Activated CD4-positive, alpha-beta T cell treated with anti-CD3 and anti-CD28 coated beads for 36 hours (primary cell): ENCODE measurements at regions of chr3 and their contacts with region 1.

Region 1: DNA sequence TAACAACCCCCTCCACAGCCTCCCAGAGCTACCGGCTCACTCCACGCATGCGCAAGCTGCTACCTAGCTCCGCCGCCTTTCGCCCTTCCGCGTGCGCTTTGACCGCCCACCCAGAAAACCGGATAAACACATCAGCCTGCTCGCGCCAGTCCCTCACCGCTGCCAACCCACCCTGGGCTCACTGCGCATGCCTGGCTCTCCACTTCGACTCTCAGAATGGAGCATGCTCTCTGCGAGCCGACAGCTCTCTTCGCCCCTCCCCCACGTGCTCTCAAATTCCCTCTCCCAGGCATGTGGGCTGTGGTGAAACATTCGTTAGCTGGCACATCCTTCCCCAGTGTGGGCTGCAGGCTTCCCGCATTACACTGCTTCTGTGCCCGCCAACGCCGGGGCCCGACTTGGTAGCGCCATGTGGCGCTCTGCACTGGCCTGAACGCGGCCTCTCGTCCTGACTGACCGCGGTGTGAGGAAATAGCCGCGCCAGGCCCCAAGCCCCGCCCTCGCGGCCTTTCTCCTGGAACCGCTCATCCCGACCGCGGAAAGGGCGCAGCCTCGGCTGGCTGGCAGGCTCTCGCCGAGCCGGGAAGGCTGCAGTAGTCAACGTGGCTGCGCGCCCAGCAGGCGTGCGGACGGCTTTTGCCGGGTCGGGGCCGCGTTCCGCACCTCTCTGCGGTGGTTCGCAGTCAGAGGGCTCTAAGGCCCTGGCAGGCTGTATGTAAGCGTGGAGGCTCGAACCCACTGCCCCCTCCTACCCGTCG is 445 bp upstream of the MSL2 start:
- DNase-seq: peak; percentile 100
- ATAC-seq: peak; percentile 82
- H3K4me3 Mint-ChIP-seq: peak overlapping the region; percentile 100
- H3K27ac Mint-ChIP-seq: peak overlapping the region; percentile 98
- H3K4me1 Mint-ChIP-seq: peaks cover 25% of the 10 kb centered on the region
- H3K27me3 Mint-ChIP-seq: no peaks in the 10 kb centered on the region

Region 2: GRCh38 chr3:134242649-134243617 is 1953.6 kb before region 1 on chr3:
- CTCF ChIA-PET with region 1: no interaction called
- POLR2A ChIA-PET with region 1: no interaction called
- intact Hi-C with region 1: loop called in 1 of 2 experiments (anchors 5 kb)
- DNase-seq: peak; percentile 20
- ATAC-seq: peak; percentile 51
- H3K4me3 Mint-ChIP-seq: no peak overlapping the region
- H3K27ac Mint-ChIP-seq: no peak overlapping the region
- H3K4me1 Mint-ChIP-seq: peaks cover 88% of the 10 kb centered on the region
- H3K27me3 Mint-ChIP-seq: no peaks in the 10 kb centered on the region

Region 3: GRCh38 chr3:136142592-136142991 is 54.0 kb before region 1 on chr3:
- CTCF ChIA-PET with region 1: no interaction called
- POLR2A ChIA-PET with region 1: interaction called, 7 read pairs
- intact Hi-C with region 1: loop called in 1 of 2 experiments (anchors 2 kb)
- DNase-seq: no peak
- ATAC-seq: peak; percentile 95
- H3K4me3 Mint-ChIP-seq: no peak overlapping the region
- H3K27ac Mint-ChIP-seq: peak overlapping the region; percentile 33
- H3K4me1 Mint-ChIP-seq: peaks cover 34% of the 10 kb centered on the region
- H3K27me3 Mint-ChIP-seq: no peaks in the 10 kb centered on the region

Region 4: DNA sequence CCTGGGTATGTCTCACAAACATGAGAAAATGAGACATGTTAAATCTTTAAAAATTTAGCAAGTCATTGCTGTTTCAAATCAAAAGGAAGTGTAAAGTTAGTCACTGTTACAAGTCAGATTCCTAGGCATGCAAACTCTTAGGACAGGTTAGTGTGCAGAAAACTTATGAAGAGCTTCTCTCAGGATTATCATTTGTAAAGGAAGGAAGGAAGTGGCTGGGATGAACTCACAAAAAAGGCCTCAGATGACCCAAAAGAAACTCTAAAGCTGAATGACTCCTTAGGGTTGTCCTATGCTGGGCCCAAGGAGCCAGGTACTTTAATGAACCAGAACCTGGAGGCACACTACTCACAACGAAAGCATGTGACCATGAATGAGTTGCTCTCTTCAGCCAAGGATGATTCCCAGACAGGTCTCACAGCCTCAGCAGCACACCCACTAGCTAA is 25.5 kb before region 1 on chr3:
- CTCF ChIA-PET with region 1: interaction called, 3 read pairs
- POLR2A ChIA-PET with region 1: interaction called, 11 read pairs
- intact Hi-C with region 1: loop called (anchors 1 to 2 kb)
- DNase-seq: peak; percentile 41
- ATAC-seq: peak; percentile 92
- H3K4me3 Mint-ChIP-seq: no peak overlapping the region
- H3K27ac Mint-ChIP-seq: no peak overlapping the region
- H3K4me1 Mint-ChIP-seq: peaks cover 39% of the 10 kb centered on the region
- H3K27me3 Mint-ChIP-seq: no peaks in the 10 kb centered on the region

Region 5: DNA sequence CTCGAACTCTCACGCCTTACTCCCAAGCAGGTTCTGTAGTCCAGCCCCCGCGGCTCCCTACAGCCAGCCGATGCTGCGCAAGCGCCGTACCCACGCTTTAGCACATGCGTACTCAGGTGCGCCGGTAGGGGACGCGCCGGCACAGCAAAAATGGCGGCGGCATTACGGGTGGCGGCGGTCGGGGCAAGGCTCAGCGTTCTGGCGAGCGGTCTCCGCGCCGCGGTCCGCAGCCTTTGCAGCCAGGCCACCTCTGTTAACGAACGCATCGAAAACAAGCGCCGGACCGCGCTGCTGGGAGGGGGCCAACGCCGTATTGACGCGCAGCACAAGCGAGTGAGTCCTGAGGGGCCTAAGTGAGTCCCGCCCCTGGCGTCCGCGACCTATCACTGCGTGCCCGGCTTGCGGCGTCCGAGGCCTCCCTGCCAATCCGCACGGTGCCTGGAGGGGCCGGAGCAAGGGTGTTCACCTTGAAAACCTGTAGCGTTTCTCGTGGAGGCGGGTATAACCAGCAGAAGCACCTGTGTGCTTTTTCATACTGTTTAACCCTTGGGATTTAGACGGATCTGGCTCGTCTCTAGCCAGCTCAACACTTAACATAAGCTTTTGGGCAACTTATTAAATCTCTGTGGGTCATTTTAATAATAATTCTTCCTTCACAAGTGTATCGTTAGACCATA is 53.8 kb after region 1 on chr3 and contains the start of gene PCCB:
- CTCF ChIA-PET with region 1: interaction called, 4 read pairs
- POLR2A ChIA-PET with region 1: interaction called, 10 read pairs
- intact Hi-C with region 1: loop called (anchors 1 kb)
- DNase-seq: peak; percentile 96
- ATAC-seq: peak; percentile 99
- H3K4me3 Mint-ChIP-seq: peak within 1 kb of the TSS; percentile 83
- H3K27ac Mint-ChIP-seq: peak within 1 kb of the TSS; percentile 91
- H3K4me1 Mint-ChIP-seq: peaks cover 15% of the 10 kb centered on the region
- H3K27me3 Mint-ChIP-seq: no peaks in the 10 kb centered on the region
- total RNA-seq, gene PCCB: 45.3 to 51.8 TPM